Common myeloid progenitor, CD34-positive (primary cell): ENCODE measurements at regions of chr15 and their contacts with region 1.

Region 1: DNA sequence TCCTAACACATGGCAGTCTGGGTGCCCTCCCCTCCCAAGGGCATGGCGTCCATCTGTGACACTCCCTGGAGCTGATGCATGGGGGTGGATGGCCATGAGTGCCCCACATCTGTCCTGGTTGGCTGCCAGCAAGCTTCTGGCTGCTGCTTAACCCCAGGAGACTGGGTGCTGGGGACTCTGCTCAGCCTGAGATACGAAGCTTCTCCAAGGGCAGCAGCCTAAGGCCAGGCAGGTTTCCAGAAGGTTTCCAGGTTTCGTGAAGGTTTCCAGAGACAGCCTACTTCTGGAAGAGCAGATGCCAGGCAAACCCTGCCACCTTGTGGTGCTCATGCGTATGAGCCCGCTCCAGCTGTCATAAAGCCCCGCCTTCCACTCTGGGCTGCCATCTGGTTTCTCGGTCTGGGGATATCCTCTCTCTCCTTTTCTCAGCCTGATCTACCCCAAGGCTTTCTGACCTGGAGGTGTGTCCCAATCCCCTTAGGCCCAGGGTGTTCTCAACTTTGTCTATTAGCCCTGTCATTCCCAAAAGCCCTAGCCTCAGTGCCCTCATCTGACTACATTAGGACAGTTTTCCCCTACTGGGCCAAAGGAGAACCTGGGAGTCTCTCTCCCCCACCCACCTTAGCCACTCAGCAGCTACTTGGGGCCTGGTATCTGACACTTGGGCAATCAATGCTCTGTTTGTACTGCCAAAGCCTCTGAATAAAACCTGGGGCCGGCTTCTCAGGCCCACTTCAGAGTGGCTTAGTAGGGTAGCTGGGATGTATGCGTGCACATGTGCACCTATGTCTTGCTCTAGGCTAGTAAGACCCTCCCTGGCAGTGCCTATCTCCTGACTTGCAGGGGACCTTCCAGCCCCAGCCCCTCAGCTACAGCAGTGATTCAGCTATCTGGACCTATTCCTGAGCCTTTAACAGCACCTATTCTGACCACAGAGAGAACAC is 12.0 kb downstream of the MRPL46 start:
- DNase-seq: peak; percentile 57 to 80 (median 78)
- H3K4me3 ChIP-seq: no peak overlapping the region
- H3K27ac ChIP-seq: no peak overlapping the region
- H3K4me1 ChIP-seq: peaks cover 0 to 9% (median 3%) of the 10 kb centered on the region in 4 experiments
- H3K27me3 ChIP-seq: no peaks in the 10 kb centered on the region

Region 2: DNA sequence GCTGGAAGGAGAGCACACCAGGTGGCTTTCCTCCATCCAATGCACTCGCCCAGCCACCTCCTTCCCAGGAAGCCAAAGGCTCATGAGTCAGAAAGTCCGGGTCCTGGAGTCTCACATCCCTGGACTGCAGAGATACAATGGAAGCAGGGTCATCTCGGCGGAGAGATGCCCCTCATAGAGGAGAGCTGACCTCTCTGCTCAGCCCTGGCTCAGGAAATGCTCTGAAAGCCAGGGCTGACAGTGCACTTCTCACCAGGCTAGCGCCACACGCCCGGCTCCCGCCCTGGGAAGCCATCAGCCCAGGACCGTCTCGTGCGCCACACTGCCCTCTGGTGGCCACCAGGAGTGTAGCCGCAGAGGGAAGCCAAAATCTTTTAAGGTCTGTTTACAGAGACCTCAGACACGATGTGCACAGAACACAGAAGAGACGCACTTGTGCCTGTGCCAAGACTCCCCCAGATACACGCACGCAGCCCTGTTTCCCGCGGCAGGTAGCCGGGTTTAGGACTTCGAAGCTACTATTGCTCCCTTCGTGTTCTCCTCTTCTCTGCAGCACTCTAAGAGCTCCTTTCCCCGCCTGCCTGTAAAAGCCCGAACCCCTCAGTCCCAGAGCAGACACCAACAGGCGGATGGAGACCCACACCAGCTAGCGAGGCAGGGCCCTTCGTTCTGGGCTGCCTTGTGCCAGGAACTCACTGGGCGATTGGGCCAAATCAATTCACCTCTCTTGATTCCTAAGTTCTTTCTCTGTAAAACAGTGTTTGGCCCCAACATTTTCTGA is 208.3 kb before region 1 on chr15:
- CTCF ChIA-PET with region 1: interaction called, 12 read pairs
- POLR2A ChIA-PET with region 1: no interaction called
- DNase-seq: peak; percentile 63 to 84 (median 78)
- H3K4me3 ChIP-seq: peak overlapping the region in 1 of 7 experiments; percentile 32
- H3K27ac ChIP-seq: no peak overlapping the region
- H3K4me1 ChIP-seq: peaks cover 0 to 3% (median 0%) of the 10 kb centered on the region in 4 experiments
- H3K27me3 ChIP-seq: peaks cover 0 to 13% (median 6%) of the 10 kb centered on the region in 5 experiments

Region 3: DNA sequence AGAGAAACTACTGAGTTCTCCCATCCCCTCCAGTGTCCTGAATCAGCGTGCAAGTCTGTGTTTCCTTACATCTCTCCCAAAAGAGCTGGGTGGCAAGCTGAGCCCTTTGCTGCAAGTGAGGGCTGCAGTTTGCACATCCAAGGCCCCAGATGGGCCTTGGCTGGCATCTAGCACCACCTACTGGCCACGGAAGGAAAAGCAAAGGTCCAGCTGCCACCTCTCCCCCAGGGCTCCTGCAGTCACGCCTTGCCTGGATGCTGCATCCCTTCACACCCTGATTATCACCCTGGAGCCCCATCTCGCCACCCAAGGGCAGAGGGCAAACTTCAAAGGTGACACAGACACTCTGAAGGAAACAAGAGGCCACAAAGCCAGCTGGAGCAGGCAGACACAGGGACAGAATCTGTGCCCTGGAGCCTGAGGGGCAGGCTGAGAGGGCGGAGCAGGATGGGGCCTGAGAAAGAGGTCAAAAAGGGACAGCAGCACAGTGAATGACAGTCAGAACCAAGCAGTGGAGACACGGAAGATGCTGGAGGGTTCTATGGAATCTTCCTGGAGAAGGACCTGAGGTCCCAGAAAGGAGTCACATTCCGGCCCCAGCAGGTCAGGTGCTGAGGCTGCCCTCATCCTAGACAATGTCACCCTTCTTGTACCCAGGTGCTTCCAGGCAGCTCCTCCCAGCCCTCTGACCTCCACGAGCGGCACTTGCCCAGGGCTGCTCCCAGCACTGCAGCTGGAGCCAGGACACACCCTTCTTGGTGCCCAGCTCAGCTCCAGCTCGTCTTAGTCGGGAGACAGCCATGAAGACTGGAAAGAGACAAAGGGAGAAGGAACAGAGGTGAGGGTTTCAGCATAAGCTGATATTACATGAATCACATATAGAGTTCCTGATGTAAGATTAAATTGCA is 180.3 kb before region 1 on chr15:
- CTCF ChIA-PET with region 1: interaction called, 10 read pairs
- POLR2A ChIA-PET with region 1: no interaction called
- DNase-seq: peak; percentile 20 to 64 (median 48)
- H3K4me3 ChIP-seq: no peak overlapping the region
- H3K27ac ChIP-seq: no peak overlapping the region
- H3K4me1 ChIP-seq: no peaks in the 10 kb centered on the region
- H3K27me3 ChIP-seq: peaks cover under 1 to 47% (median 12%) of the 10 kb centered on the region in 5 experiments

Region 4: DNA sequence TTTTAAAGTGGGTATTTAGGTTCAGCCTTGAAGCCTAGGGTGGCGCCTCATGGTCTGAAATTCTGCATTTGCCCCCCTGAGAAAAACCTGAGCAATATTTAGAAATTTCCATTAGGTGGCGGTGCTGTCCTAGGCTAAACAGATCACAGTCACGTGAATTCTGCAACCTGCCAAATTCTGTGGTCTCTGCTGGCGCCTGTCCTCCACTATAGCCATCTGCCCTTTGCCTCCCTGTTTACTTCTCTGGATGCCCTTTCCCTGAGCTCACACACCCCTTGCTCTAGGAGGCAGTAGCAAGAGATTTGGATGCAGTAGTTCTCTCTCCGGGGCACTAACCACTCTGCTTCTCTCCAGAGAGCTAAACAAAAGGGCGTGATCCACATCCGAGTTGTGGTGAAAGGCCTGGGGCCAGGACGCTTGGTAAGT is 21.5 kb after region 1 on chr15:
- CTCF ChIA-PET with region 1: interaction called, 10 read pairs
- POLR2A ChIA-PET with region 1: no interaction called
- DNase-seq: peak; percentile 48 to 73 (median 62)
- H3K4me3 ChIP-seq: no peak overlapping the region
- H3K27ac ChIP-seq: no peak overlapping the region
- H3K4me1 ChIP-seq: no peaks in the 10 kb centered on the region
- H3K27me3 ChIP-seq: no peaks in the 10 kb centered on the region